Endothelial cell of umbilical vein (primary cell): ENCODE measurements at regions of chr2 and their contacts with region 1.

Region 1: DNA sequence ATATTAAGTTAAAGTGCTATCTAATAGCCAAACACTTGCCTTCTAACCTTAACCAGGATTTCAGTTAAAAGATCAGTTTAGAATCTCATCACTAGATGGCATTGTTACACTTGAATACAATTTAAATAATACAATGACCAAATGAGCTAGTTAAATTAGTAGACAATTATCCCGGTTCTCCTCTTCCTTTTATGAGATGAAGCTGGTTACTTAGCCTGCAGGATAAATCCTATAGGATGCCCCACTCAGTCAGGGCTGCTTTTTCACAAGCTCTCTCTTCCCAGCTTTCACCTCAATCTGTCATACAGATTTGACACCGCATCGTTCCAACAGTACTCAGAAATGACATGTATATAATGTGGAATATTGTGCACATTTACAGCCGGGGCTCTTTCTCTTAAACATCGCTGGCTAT is 678.8 kb downstream of the KCNJ3 start:
- DNase-seq: peak; percentile 75
- H3K4me3 ChIP-seq: peak overlapping the region in 1 of 3 experiments; percentile 40
- H3K27ac ChIP-seq: peak overlapping the region; percentile 43
- H3K4me1 ChIP-seq: peaks cover 19% of the 10 kb centered on the region
- H3K27me3 ChIP-seq: no peaks in the 10 kb centered on the region
- CTCF ChIP-seq: peak; percentile 12 to 24
- POLR2A ChIP-seq: no peak

Region 2: GRCh38 chr2:156192468-156192867 is 815.2 kb after region 1 on chr2:
- CTCF ChIA-PET with region 1: interaction called, 4 read pairs
- POLR2A ChIA-PET with region 1: no interaction called
- dilution Hi-C with region 1: no loop called
- intact Hi-C with region 1: loop called (anchors 10 kb)
- DNase-seq: peak; percentile 10
- H3K4me3 ChIP-seq: no peak overlapping the region
- H3K27ac ChIP-seq: no peak overlapping the region
- H3K4me1 ChIP-seq: no peaks in the 10 kb centered on the region
- H3K27me3 ChIP-seq: no peaks in the 10 kb centered on the region
- CTCF ChIP-seq: peak in 1 of 2 donors; percentile 12
- POLR2A ChIP-seq: no peak

Region 3: DNA sequence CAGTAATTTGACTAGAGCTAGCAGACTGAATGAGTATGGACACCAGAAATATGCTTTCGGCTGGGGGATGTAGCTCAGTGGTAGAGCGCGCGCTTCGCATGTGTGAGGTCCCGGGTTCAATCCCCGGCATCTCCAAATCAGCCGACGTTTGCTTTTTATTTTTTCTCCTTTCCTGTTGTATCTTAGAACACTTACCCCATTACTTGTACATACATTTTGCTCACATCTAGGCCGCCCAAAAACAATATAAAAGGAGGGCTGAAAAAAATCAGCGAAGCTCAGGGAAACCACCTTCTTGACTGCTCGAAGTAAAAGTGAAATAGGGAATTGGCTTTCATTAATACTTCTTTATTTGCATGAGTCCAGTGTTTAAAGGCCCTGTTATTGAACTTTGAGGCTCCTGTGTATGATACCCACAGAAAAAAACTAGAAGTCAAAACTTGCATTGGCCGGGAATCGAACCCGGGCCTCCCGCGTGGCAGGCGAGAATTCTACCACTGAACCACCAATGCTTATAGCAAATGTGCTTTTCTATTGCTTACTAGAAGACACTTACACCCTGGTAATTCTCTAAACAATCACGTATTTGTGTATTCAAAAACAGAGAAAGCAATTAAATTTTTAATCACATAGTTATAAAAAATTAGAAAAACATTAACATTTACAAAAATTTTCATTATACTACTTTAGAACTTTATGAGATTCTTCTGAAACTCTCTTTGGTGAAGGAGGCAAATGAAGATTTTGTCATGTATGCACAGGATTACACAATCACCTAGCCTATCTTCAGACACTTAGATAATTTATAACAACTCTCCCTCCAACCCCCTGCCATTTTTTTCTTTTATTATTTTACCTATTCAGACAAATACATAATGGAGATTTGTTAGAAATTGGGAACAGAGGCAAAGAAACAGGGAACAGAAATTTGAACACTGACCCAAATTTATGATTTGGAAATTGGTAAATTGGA is 1023.7 kb after region 1 on chr2:
- CTCF ChIA-PET with region 1: interaction called, 8 read pairs
- POLR2A ChIA-PET with region 1: no interaction called
- dilution Hi-C with region 1: no loop called
- intact Hi-C with region 1: loop called (anchors 2 kb)
- DNase-seq: peak; percentile 91
- H3K4me3 ChIP-seq: peak overlapping the region; percentile 48 to 71 (median 49)
- H3K27ac ChIP-seq: peak overlapping the region; percentile 41
- H3K4me1 ChIP-seq: peaks cover 5% of the 10 kb centered on the region
- H3K27me3 ChIP-seq: peaks cover 0 to 5% of the 10 kb centered on the region in 2 experiments
- CTCF ChIP-seq: no peak
- POLR2A ChIP-seq: no peak

Region 4: GRCh38 chr2:156892467-156893281 is 1515.4 kb after region 1 on chr2:
- CTCF ChIA-PET with region 1: interaction called, 6 read pairs
- POLR2A ChIA-PET with region 1: no interaction called
- dilution Hi-C with region 1: no loop called
- intact Hi-C with region 1: loop called (anchors 2 kb)
- DNase-seq: peak; percentile 46
- H3K4me3 ChIP-seq: peak overlapping the region in 1 of 3 experiments; percentile 56
- H3K27ac ChIP-seq: no peak overlapping the region
- H3K4me1 ChIP-seq: peaks cover 9% of the 10 kb centered on the region
- H3K27me3 ChIP-seq: peaks cover 14 to 35% of the 10 kb centered on the region in 2 experiments
- CTCF ChIP-seq: peak in 1 of 2 donors; percentile 5
- POLR2A ChIP-seq: no peak

Region 5: DNA sequence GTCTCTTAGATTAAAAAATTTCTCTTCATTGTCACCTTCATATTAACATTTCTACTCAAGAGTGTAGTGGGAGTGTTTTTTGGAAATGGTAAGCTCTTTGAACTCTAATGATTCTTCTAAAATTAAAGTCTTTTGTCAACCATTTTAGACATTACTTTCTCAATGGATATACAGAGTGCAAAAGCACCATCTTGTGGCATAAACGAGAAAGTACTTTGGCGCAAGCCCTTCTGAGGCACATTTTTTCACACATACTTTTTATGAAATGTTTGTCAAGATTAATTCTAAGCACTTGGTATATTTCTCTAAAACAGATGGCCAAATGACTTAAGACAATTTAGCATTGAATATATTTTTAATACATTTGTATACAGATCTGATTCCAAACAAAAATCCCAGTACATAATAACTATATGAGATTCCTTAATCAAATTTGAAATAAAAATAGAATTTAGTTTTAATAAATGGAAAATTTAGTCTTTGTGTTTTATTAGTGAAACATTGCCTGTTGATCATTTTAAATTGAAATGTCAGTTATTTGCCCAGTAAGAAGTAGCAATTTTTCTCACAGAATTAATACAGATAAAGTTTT is 1816.9 kb after region 1 on chr2:
- CTCF ChIA-PET with region 1: interaction called, 86 read pairs
- POLR2A ChIA-PET with region 1: no interaction called
- dilution Hi-C with region 1: no loop called
- intact Hi-C with region 1: loop called (anchors 1 kb)
- DNase-seq: peak; percentile 78
- H3K4me3 ChIP-seq: no peak overlapping the region
- H3K27ac ChIP-seq: peak overlapping the region; percentile 21
- H3K4me1 ChIP-seq: peaks cover 18% of the 10 kb centered on the region
- H3K27me3 ChIP-seq: no peaks in the 10 kb centered on the region
- CTCF ChIP-seq: peak; percentile 45 to 59
- POLR2A ChIP-seq: no peak